Psoas muscle (tissue), 8 donors: ENCODE measurements at regions of chr2 and their contacts with region 1.

Region 1: DNA sequence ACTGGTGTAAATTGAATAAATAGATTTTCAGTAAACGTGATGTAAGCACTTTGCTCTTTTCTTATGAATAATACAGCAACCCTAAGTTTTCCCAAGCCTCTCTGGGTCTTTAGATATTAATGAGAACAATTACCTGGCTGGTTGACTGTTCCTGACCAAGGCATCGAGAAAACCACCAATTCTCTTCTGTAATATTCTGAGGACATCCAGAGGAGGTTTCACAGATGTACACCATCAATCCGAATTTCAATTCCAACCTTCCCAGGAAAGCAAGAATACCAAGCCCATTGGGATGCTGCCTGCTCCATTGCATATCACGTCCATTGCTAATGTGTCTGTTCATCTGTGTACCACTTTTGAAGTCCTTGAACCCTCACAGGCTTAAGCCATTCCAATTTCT is 571.8 kb downstream of the NUP35 start:
- DNase-seq: no peak
- ATAC-seq: no peak
- H3K4me3 ChIP-seq: no peak overlapping the region
- H3K27ac ChIP-seq: no peak overlapping the region
- H3K4me1 ChIP-seq: no peaks in the 10 kb centered on the region
- H3K27me3 ChIP-seq: no peaks in the 10 kb centered on the region
- CTCF ChIP-seq: no peak

Region 2: GRCh38 chr2:183253441-183254130 is 442.4 kb before region 1 on chr2:
- intact Hi-C with region 1: loop called (anchors 5 to 10 kb)
- DNase-seq: no peak
- ATAC-seq: no peak
- H3K4me3 ChIP-seq: no peak overlapping the region
- H3K27ac ChIP-seq: no peak overlapping the region
- H3K4me1 ChIP-seq: no peaks in the 10 kb centered on the region
- H3K27me3 ChIP-seq: no peaks in the 10 kb centered on the region
- CTCF ChIP-seq: no peak

Region 3: DNA sequence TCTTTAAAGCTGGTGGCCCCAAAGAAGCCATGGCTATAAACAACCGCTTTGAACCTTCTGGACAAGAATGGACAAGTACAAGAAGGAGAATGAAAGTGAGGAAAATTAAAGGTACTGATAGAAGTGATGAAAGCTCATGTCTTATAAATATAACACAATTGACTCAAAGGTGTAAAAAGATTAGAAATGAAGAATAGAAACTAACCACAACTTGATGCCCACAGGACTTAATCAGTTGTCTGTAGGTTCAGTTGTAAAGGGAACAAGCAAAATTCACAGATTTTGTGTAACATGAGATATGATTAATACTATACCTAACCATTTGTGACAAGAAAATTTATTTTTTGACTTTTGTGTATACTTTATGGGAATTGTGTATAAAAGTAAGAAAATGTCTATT is 436.1 kb before region 1 on chr2:
- intact Hi-C with region 1: loop called in 1 of 2 experiments (anchors 10 kb)
- DNase-seq: no peak
- ATAC-seq: no peak
- H3K4me3 ChIP-seq: no peak overlapping the region
- H3K27ac ChIP-seq: no peak overlapping the region
- H3K4me1 ChIP-seq: no peaks in the 10 kb centered on the region
- H3K27me3 ChIP-seq: no peaks in the 10 kb centered on the region
- CTCF ChIP-seq: no peak

Region 4: DNA sequence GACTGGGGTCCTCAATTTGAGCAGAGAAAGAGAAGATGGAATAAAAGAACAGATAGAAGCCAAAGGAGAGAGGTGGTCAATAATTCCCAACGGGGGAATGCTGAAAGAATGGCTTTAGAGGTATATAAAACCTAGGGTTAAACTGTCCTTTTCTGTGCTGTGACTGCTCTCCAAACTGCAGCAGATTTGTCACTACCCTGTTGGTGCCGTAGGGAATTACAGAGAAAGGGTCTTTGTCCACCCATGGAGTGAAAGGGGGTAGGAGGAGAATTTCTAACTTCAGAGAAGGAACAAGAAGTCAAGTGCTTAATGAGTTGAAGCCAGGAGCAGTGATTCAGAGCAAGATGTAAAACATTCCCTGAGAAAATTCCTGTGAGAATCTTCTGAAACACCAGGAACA is 85.3 kb before region 1 on chr2:
- intact Hi-C with region 1: no loop called
- DNase-seq: no peak
- ATAC-seq: no peak
- H3K4me3 ChIP-seq: no peak overlapping the region
- H3K27ac ChIP-seq: no peak overlapping the region
- H3K4me1 ChIP-seq: peaks cover 7% of the 10 kb centered on the region
- H3K27me3 ChIP-seq: no peaks in the 10 kb centered on the region
- CTCF ChIP-seq: no peak